CD8-positive, alpha-beta T cell (primary cell): ENCODE measurements at regions of chr22 and their contacts with region 1.

Region 1: GRCh38 chr22:41204992-41205900 is at the start of gene L3MBTL2:
- DNase-seq: peak; percentile 96 to 99 (median 98)
- ATAC-seq: peak; percentile 100
- H3K4me3 ChIP-seq: peak within 1 kb of the TSS; percentile 77 to 83
- H3K4me3 Mint-ChIP-seq: peak within 1 kb of the TSS; percentile 97
- H3K27ac ChIP-seq: peak within 1 kb of the TSS; percentile 60 to 83
- H3K27ac Mint-ChIP-seq: peak within 1 kb of the TSS; percentile 96
- H3K4me1 ChIP-seq: peaks cover 9% of the 10 kb centered on the region
- H3K4me1 Mint-ChIP-seq: peaks cover 32% of the 10 kb centered on the region
- H3K27me3 ChIP-seq: peaks cover 0 to 2% of the 10 kb centered on the region in 2 experiments
- H3K27me3 Mint-ChIP-seq: peaks cover 9% of the 10 kb centered on the region
- CTCF ChIP-seq: no peak
- total RNA-seq, gene L3MBTL2: 16.3 to 20.3 TPM

Region 2: GRCh38 chr22:40533712-40534378 is 671.4 kb before region 1 on chr22:
- CTCF ChIA-PET with region 1: no interaction called
- POLR2A ChIA-PET with region 1: no interaction called
- intact Hi-C with region 1: no loop called
- DNase-seq: peak; percentile 6 to 86 (median 58)
- ATAC-seq: peak; percentile 98
- H3K4me3 ChIP-seq: peak overlapping the region; percentile 46 to 48
- H3K4me3 Mint-ChIP-seq: peak overlapping the region; percentile 82
- H3K27ac ChIP-seq: peak overlapping the region; percentile 19 to 63
- H3K27ac Mint-ChIP-seq: peak overlapping the region; percentile 87
- H3K4me1 ChIP-seq: peaks cover 41% of the 10 kb centered on the region
- H3K4me1 Mint-ChIP-seq: peaks cover 63% of the 10 kb centered on the region
- H3K27me3 ChIP-seq: no peaks in the 10 kb centered on the region
- H3K27me3 Mint-ChIP-seq: no peaks in the 10 kb centered on the region
- CTCF ChIP-seq: no peak

Region 3: GRCh38 chr22:40636380-40637182 is 568.7 kb before region 1 on chr22 and contains the start of gene MRTFA:
- CTCF ChIA-PET with region 1: no interaction called
- POLR2A ChIA-PET with region 1: no interaction called
- intact Hi-C with region 1: loop called in 1 of 2 experiments (anchors 2 kb)
- DNase-seq: peak; percentile 98 to 100 (median 99)
- ATAC-seq: peak; percentile 93
- H3K4me3 ChIP-seq: peak within 1 kb of the TSS; percentile 98 to 100
- H3K4me3 Mint-ChIP-seq: peak within 1 kb of the TSS; percentile 99
- H3K27ac ChIP-seq: peak within 1 kb of the TSS; percentile 89
- H3K27ac Mint-ChIP-seq: peak within 1 kb of the TSS; percentile 98
- H3K4me1 ChIP-seq: peaks cover 34% of the 10 kb centered on the region
- H3K4me1 Mint-ChIP-seq: peaks cover 45% of the 10 kb centered on the region
- H3K27me3 ChIP-seq: no peaks in the 10 kb centered on the region
- H3K27me3 Mint-ChIP-seq: no peaks in the 10 kb centered on the region
- CTCF ChIP-seq: no peak
- total RNA-seq, gene MRTFA: 53.7 to 56.7 TPM

Region 4: DNA sequence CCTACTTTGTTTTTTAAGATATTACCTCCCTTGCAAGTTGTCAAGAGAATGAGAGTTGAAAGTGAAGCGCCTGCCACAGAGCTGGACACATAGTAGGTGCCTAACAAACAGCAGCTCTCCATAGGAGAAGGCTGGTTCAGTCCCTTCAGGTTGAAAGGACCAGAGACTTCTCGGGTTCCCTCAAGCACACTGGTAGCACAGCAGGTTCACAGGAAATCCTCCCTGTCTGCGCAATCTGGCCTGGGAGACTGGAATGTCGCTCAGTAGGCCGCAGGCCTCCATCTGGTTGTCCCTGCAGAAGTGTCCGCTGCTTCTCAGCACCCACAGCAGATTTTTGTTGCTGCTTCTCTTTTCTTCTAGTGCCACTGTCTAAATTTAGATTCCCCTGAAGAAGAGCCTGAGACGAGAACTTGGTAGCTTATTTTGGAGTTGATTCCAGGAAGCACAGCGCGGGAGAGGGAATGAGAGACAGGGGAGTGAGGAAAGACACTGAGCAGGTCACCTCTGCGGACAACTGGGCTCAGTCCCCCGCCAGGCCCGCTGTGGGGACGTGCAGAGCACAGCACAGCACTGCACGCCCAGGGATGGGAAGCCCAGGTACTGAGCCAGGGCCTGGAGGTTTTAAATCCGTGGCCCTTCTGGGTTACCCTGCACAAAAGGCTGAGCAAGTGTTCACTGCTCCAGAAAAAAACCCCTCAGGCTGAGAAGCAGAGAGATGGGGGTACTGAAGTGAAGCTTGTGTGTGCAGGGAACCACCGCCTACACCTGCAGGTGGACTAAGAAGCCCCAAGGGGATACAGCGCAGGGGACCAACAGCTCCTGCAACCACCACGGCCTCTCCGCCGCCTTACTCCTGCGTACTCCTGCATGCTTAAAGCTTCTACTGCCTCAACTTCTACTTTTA is 222.5 kb before region 1 on chr22:
- CTCF ChIA-PET with region 1: no interaction called
- POLR2A ChIA-PET with region 1: no interaction called
- intact Hi-C with region 1: no loop called
- DNase-seq: no peak
- ATAC-seq: no peak
- H3K4me3 ChIP-seq: no peak overlapping the region
- H3K4me3 Mint-ChIP-seq: no peak overlapping the region
- H3K27ac ChIP-seq: no peak overlapping the region
- H3K27ac Mint-ChIP-seq: no peak overlapping the region
- H3K4me1 ChIP-seq: no peaks in the 10 kb centered on the region
- H3K4me1 Mint-ChIP-seq: no peaks in the 10 kb centered on the region
- H3K27me3 ChIP-seq: no peaks in the 10 kb centered on the region
- H3K27me3 Mint-ChIP-seq: no peaks in the 10 kb centered on the region
- CTCF ChIP-seq: no peak

Region 5: GRCh38 chr22:41022470-41023298 is 182.6 kb before region 1 on chr22:
- CTCF ChIA-PET with region 1: no interaction called
- POLR2A ChIA-PET with region 1: no interaction called
- intact Hi-C with region 1: loop called in 1 of 2 experiments (anchors 1 kb)
- DNase-seq: peak; percentile 46 to 89 (median 80)
- ATAC-seq: peak; percentile 77
- H3K4me3 ChIP-seq: peak overlapping the region; percentile 60 to 77
- H3K4me3 Mint-ChIP-seq: peak overlapping the region; percentile 81
- H3K27ac ChIP-seq: peak overlapping the region; percentile 74 to 84
- H3K27ac Mint-ChIP-seq: peak overlapping the region; percentile 84
- H3K4me1 ChIP-seq: peaks cover 12% of the 10 kb centered on the region
- H3K4me1 Mint-ChIP-seq: peaks cover 14% of the 10 kb centered on the region
- H3K27me3 ChIP-seq: peaks cover 0 to 4% of the 10 kb centered on the region in 2 experiments
- H3K27me3 Mint-ChIP-seq: no peaks in the 10 kb centered on the region
- CTCF ChIP-seq: no peak

Region 6: DNA sequence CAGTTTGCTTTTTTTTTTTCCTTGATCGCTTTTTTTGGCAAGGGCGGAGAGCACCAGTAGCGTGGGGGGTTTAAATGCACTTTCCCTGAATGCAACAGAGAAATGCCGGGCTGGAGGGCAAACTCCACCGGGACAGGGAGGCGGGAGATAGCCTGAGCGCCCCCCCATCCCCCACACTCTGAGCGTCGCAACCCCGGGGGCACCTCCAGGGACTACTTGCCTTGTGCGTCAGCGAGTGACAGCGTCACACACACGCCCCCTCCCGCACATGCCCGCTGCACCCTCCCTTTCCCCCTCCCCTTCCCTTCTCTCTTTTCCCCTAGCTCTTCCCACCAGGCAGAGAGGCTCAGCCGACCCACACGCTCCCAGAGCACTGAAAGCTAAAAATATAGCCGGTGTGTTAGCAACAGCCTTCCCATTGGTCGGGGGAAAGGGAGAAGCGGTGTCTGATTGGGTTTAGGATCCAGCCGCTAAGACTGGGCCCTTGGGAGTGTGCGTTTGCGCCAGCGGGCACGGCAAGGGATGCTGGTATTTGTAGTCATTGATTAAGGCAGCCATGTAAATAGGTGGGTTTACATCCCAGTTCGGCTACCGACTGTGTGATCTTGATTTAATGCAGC is 243.1 kb after region 1 on chr22:
- CTCF ChIA-PET with region 1: no interaction called
- POLR2A ChIA-PET with region 1: no interaction called
- intact Hi-C with region 1: loop called in 1 of 2 experiments (anchors 10 kb)
- DNase-seq: peak; percentile 77 to 97 (median 88)
- ATAC-seq: peak; percentile 70
- H3K4me3 ChIP-seq: peak overlapping the region; percentile 79 to 96
- H3K4me3 Mint-ChIP-seq: peak overlapping the region; percentile 90
- H3K27ac ChIP-seq: peak overlapping the region; percentile 78 to 99
- H3K27ac Mint-ChIP-seq: peak overlapping the region; percentile 98
- H3K4me1 ChIP-seq: peaks cover 11% of the 10 kb centered on the region
- H3K4me1 Mint-ChIP-seq: peaks cover 23% of the 10 kb centered on the region
- H3K27me3 ChIP-seq: no peaks in the 10 kb centered on the region
- H3K27me3 Mint-ChIP-seq: no peaks in the 10 kb centered on the region
- CTCF ChIP-seq: no peak

Region 7: GRCh38 chr22:42079319-42080251 is 874.3 kb after region 1 on chr22 and contains the start of gene SMDT1:
- CTCF ChIA-PET with region 1: no interaction called
- POLR2A ChIA-PET with region 1: no interaction called
- intact Hi-C with region 1: loop called in 1 of 2 experiments (anchors 10 kb)
- DNase-seq: peak; percentile 95 to 99 (median 98)
- ATAC-seq: peak; percentile 92
- H3K4me3 ChIP-seq: peak within 1 kb of the TSS; percentile 79 to 80
- H3K4me3 Mint-ChIP-seq: peak within 1 kb of the TSS; percentile 93
- H3K27ac ChIP-seq: peak within 1 kb of the TSS; percentile 89 to 97
- H3K27ac Mint-ChIP-seq: peak within 1 kb of the TSS; percentile 98
- H3K4me1 ChIP-seq: peaks cover 21% of the 10 kb centered on the region
- H3K4me1 Mint-ChIP-seq: peaks cover 36% of the 10 kb centered on the region
- H3K27me3 ChIP-seq: no peaks in the 10 kb centered on the region
- H3K27me3 Mint-ChIP-seq: no peaks in the 10 kb centered on the region
- CTCF ChIP-seq: no peak
- total RNA-seq, gene SMDT1: 30.4 to 34.5 TPM